GM10248 (cell line): ENCODE measurements at regions of chr3 and their contacts with region 1.

Region 1: GRCh38 chr3:50542177-50543034 is 25.1 kb downstream of the C3orf18 start:
- DNase-seq: peak; percentile 85
- CTCF ChIP-seq: peak; percentile 82

Region 2: DNA sequence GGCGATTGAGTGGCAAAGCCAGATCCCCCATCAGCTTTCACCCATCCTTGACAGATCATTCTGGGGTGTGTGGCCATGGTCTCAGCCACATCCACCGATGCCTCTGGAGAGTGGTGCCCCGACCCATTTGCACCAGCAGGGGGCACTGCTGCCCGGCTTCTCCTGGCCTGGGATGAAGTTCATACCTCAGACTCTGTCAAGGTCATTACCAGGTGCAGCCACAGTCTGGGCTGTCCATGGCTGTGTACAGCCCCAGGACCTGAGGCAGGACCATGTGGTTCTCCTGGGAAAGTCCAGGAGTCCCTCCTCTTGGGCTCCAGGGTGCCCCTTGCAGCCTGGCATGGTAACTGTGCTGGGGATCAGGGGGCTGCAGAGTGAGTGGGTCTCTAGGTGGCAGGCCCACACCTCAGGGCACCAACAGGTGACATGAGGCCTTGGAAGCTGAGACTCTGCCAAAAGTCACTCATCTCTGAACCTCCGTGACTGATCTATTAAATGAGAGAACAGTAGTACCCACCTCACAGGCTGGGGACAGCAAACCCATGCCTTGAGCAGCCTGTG is 106.2 kb before region 1 on chr3:
- CTCF ChIA-PET with region 1: interaction called, 56 read pairs
- POLR2A ChIA-PET with region 1: no interaction called
- DNase-seq: peak; percentile 88
- CTCF ChIP-seq: peak; percentile 65

Region 3: GRCh38 chr3:50519471-50520089 is 22.8 kb before region 1 on chr3:
- CTCF ChIA-PET with region 1: interaction called, 38 read pairs
- POLR2A ChIA-PET with region 1: no interaction called
- DNase-seq: peak; percentile 77
- CTCF ChIP-seq: peak; percentile 98